Ascending aorta (tissue), 2 donors: ENCODE measurements at regions of chr3 and their contacts with region 1.

Region 1: DNA sequence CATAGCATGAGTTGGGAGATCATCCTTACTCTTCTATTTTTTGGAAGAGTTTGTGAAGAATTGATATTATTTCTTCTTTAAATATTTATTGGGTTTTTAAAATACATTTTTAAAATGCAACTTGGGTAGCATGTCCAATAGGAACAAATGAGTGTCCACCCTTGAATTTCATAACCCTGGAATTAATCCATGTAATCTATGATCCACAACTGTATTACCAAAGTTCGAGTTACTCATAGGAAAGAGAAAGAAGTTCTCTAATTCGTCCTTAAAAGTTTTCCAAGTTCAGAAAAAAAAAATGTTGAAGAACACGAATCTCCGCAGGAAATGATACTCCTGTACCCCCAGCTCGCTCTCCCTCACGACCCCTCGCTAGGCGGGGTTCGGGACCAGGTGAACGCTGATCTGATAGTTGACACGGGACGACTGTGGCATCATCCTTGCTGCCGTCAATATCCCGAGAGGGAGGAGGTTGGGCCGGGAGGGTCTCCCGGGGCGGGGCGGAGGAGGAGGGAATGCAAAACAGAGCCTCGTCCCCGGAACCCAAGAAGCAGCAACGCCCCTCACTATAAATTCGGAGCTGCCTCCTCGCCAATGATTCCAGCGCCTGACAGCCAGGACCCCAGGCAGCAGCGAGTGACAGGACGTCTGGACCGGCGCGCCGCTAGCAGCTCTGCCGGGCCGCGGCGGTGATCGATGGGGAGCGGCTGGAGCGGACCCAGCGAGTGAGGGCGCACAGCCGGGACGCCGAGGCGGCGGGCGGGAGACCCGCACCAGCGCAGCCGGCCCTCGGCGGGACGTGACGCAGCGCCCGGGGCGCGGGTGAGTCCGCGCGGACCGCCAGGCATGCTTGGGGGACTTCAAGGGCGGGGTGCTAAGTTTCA is at the start of gene AGTR1:
- DNase-seq: peak in 1 of 2 donors; percentile 78
- H3K4me3 ChIP-seq: peak within 1 kb of the TSS; percentile 73 to 78
- H3K27ac ChIP-seq: peak within 1 kb of the TSS; percentile 1 to 58
- H3K4me1 ChIP-seq: no peaks in the 10 kb centered on the region
- H3K27me3 ChIP-seq: no peaks in the 10 kb centered on the region
- CTCF ChIP-seq: no peak
- total RNA-seq, gene AGTR1: 20.0 TPM

Region 2: GRCh38 chr3:148643389-148643840 is 54.1 kb before region 1 on chr3:
- intact Hi-C with region 1: loop called (anchors 1 kb)
- DNase-seq: peak in 1 of 2 donors; percentile 62
- H3K4me3 ChIP-seq: no peak overlapping the region
- H3K27ac ChIP-seq: peak overlapping the region; percentile 50 to 79
- H3K4me1 ChIP-seq: peaks cover 0 to 6% of the 10 kb centered on the region in 2 donors
- H3K27me3 ChIP-seq: no peaks in the 10 kb centered on the region
- CTCF ChIP-seq: no peak

Region 3: GRCh38 chr3:148757238-148758215 is 60.0 kb after region 1 on chr3:
- intact Hi-C with region 1: no loop called
- DNase-seq: no peak
- H3K4me3 ChIP-seq: no peak overlapping the region
- H3K27ac ChIP-seq: no peak overlapping the region
- H3K4me1 ChIP-seq: no peaks in the 10 kb centered on the region
- H3K27me3 ChIP-seq: no peaks in the 10 kb centered on the region
- CTCF ChIP-seq: no peak